CD4-positive, alpha-beta memory T cell (primary cell): ENCODE measurements at regions of chr6 and their contacts with region 1.

Region 1: DNA sequence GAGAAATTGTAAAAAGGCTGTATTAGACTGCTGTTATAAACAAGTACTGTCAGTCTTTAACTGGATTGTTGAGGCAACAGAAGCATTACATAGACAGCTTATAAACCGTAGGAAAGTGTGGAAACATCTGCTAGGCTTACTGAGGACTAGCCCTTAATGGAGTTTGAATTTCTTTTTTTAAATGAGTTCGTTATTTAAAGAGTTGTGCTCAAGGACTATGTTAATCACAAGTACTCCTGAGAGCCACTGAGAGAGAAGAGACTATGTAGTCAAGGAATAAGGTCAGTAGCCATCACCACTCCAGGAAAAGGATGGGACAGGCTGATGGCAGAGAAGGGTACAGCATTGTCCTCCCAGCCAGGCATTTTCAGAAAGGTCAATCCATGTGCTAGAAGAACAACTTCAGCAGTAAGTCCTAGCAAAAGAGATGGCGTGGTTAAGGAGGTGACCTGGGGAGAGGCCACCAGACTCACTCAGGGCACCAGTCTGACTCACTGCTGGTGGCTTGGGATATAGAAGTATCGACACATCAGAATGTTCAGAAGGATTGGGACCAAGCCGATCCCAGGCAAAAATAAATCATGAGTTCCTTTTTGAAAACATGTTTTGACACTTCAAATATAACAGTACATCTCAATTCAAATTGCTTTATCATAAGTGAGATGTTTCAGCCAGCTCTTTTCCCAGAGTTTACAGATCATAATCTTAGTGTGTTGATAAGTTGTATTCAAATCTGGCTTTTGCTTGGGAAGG is 6.4 kb downstream of the RPS12 start:
- DNase-seq: no peak
- H3K4me3 ChIP-seq: no peak overlapping the region
- H3K4me3 Mint-ChIP-seq: no peak overlapping the region
- H3K27ac ChIP-seq: no peak overlapping the region
- H3K27ac Mint-ChIP-seq: peak overlapping the region; percentile 48 to 99 (median 73)
- H3K4me1 ChIP-seq: peaks cover 32% of the 10 kb centered on the region
- H3K4me1 Mint-ChIP-seq: peaks cover 35 to 66% (median 51%) of the 10 kb centered on the region in 4 donors
- H3K27me3 ChIP-seq: no peaks in the 10 kb centered on the region
- H3K27me3 Mint-ChIP-seq: no peaks in the 10 kb centered on the region

Region 2: DNA sequence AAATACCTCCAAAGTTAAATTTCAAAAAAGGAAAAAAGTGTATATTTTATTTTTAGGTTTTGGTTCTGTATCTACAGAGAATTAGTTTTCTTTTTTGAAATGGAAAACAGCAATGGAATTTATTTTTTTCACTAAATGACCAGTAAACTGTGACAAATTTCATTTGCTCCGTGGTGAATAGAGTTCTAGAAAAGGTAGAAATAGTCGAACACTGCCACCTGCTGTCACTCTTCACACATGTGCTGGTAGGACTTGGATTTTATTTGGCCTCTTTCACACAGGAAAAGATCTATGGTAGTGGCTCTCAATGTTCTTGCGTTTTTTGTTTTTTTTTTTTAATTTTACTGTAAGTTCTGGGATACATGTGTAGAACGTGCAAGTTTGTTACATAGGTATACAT is 732.8 kb after region 1 on chr6:
- CTCF ChIA-PET with region 1: no interaction called
- POLR2A ChIA-PET with region 1: no interaction called
- intact Hi-C with region 1: loop called (anchors 2 kb)
- DNase-seq: peak in 1 of 5 donors; percentile 16
- H3K4me3 ChIP-seq: no peak overlapping the region
- H3K4me3 Mint-ChIP-seq: no peak overlapping the region
- H3K27ac ChIP-seq: no peak overlapping the region
- H3K27ac Mint-ChIP-seq: no peak overlapping the region
- H3K4me1 ChIP-seq: no peaks in the 10 kb centered on the region
- H3K4me1 Mint-ChIP-seq: no peaks in the 10 kb centered on the region
- H3K27me3 ChIP-seq: no peaks in the 10 kb centered on the region
- H3K27me3 Mint-ChIP-seq: no peaks in the 10 kb centered on the region